GM10248 (cell line): ENCODE measurements at regions of chr6 and their contacts with region 1.

Region 1: DNA sequence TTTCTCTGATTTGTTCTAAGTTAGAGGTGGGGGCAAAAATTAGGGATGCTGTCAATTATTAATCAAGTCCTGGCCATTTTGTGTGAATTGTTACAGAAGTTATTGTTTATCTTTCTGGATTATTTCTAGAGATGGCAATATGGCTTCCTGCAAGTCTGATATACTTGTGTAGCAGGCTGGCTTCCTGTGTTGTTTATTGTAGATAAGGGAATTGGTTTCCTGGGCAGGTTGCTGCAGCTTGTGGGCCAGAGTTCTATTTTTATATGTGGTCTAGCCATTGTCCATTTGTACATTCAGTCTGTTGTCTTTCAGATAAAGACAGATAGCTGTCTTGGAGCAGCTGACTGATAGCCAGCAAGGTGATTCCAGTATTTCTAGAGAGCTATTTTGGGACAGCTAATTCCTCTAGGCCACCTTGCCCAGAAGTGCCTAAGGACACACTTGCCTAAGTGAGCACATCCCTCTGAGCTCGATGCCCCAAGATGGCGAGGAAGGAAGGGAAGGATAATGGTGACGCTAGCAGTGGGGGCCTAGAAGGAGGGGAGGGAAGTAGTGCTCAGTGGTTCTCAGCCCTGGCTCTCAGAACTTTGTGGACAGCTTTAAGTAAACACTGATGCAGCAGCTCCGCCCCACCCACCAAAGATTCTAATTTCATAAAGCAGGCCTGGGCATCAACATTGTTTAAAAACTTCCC is 25.5 kb downstream of the DDO start:
- DNase-seq: no peak
- CTCF ChIP-seq: no peak

Region 2: GRCh38 chr6:109705258-109705657 is 684.6 kb before region 1 on chr6:
- CTCF ChIA-PET with region 1: interaction called, 50 read pairs
- POLR2A ChIA-PET with region 1: no interaction called
- DNase-seq: peak; percentile 67
- CTCF ChIP-seq: peak; percentile 97

Region 3: GRCh38 chr6:110179401-110180227 is 210.2 kb before region 1 on chr6 and contains the start of gene WASF1:
- CTCF ChIA-PET with region 1: interaction called, 23 read pairs
- POLR2A ChIA-PET with region 1: no interaction called
- DNase-seq: peak; percentile 89
- CTCF ChIP-seq: peak; percentile 25

Region 4: GRCh38 chr6:110366975-110367374 is 22.9 kb before region 1 on chr6:
- CTCF ChIA-PET with region 1: interaction called, 11 read pairs
- POLR2A ChIA-PET with region 1: no interaction called
- DNase-seq: no peak
- CTCF ChIP-seq: no peak